ENCODE measurements at regions of chr4 and their contacts with region 1.

Region 1: DNA sequence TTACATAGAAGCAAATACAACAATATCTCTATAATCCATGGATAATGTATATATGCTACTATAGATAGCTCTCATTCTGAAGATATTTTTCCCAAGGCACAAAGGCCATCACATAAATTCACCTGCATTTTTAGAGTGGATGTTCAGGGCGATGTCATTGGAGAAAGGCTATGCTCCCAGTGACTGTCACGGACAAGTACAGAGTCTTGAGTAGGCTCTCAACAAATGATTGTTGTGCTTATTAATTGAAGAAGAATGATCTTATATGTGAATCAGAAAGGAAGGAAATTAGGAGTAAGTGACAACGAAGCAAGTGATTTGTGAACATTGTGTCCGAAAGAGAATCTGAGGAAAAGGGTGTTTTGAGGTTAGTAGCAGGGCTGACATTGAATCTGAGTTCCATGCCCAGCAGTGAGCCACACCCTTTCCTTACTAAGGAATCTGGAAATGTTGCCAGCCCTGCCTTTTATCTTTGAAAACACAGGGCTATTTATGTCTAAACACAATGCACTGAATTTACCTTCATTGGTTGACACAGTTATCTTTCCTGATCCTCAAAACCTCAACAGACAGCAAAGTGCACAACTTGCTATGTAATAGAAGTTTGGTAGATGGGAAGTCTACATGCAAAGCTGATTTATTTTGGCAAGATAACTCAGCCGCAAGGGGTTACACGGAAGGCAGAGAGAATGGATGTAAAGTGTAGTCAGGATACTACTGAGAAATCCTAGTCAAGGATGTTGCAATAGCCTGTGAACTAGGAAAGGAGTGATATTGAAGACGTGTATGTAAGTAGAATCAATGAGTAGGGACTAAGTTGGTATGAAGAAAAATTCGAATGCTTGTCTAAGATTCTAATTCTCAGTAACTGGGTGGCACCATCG is 50.4 kb downstream of the SORBS2 start:
- DNase-seq: peak in 1 of 2 donors; percentile 35
- ATAC-seq: peak; percentile 60 to 87 (median 79)
- H3K4me3 ChIP-seq: peak overlapping the region in 3 of 10 donors; percentile 5 to 19 (median 18)
- H3K27ac ChIP-seq: peak overlapping the region; percentile 32 to 81 (median 60)
- H3K4me1 ChIP-seq: peaks cover 6 to 93% (median 55%) of the 10 kb centered on the region in 9 donors
- H3K27me3 ChIP-seq: no peaks in the 10 kb centered on the region
- CTCF ChIP-seq: no peak

Region 2: GRCh38 chr4:185716577-185717376 is 44.8 kb before region 1 on chr4:
- intact Hi-C with region 1: loop called in 1 of 10 experiments (anchors 2 kb)
- DNase-seq: peak; percentile 39 to 56
- ATAC-seq: peak; percentile 44 to 90 (median 72)
- H3K4me3 ChIP-seq: peak overlapping the region in 3 of 10 donors; percentile 8 to 29 (median 28)
- H3K27ac ChIP-seq: peak overlapping the region in 9 of 10 donors; percentile 30 to 78 (median 52)
- H3K4me1 ChIP-seq: peaks cover 12 to 97% (median 55%) of the 10 kb centered on the region in 9 donors
- H3K27me3 ChIP-seq: no peaks in the 10 kb centered on the region
- CTCF ChIP-seq: no peak

Region 3: GRCh38 chr4:185933078-185933581 is 171.5 kb after region 1 on chr4:
- intact Hi-C with region 1: no loop called
- DNase-seq: peak in 1 of 2 donors; percentile 27
- ATAC-seq: peak; percentile 65 to 91 (median 78)
- H3K4me3 ChIP-seq: peak overlapping the region in 3 of 10 donors; percentile 13 to 39 (median 16)
- H3K27ac ChIP-seq: peak overlapping the region in 7 of 10 donors; percentile 25 to 63 (median 43)
- H3K4me1 ChIP-seq: peaks cover 0 to 15% (median 0%) of the 10 kb centered on the region in 9 donors
- H3K27me3 ChIP-seq: no peaks in the 10 kb centered on the region
- CTCF ChIP-seq: no peak

Region 4: DNA sequence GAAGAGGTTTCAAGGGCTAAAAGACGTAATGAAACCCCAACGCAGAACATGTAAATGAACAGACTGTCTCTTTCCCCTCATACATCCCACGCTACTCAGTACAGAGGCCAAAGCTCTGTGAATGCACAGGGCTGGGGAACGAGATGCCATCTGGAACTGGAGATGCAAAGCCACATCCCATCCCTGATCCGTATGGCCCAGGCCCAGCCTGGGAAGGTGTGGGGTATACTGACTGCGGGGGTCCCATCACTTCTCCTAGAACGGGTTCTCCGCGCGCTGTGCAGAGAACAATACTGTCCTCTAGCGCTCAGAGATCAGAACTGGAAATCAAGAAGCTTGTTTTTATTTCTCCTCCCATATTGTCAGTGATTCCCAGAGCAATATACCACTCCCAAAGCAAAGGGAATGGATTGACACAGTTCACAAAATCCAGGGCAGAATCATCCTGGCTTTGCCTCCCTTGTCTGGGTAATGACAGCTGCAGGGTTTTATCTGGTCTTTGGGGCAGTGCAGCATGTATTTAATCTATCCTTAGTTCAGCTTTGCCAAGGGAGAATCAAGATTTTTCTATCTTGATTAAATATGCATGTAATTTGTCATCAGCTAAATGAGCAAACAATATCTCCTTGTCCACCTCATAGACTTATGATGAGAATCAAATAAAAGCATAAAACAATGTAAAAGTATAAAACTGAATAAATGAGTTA is 260.0 kb after region 1 on chr4:
- intact Hi-C with region 1: loop called in 1 of 10 experiments (anchors 10 kb)
- DNase-seq: peak; percentile 25 to 36
- ATAC-seq: peak; percentile 62 to 86 (median 72)
- H3K4me3 ChIP-seq: peak overlapping the region in 8 of 10 donors; percentile 5 to 47 (median 32)
- H3K27ac ChIP-seq: peak overlapping the region in 5 of 10 donors; percentile 6 to 68 (median 35)
- H3K4me1 ChIP-seq: peaks cover 0 to 20% (median 7%) of the 10 kb centered on the region in 9 donors
- H3K27me3 ChIP-seq: no peaks in the 10 kb centered on the region
- CTCF ChIP-seq: peak; percentile 60 to 92 (median 85)